Cardiac septum (tissue), 1 donor: ENCODE measurements at regions of chr5 and their contacts with region 1.

Region 1: DNA sequence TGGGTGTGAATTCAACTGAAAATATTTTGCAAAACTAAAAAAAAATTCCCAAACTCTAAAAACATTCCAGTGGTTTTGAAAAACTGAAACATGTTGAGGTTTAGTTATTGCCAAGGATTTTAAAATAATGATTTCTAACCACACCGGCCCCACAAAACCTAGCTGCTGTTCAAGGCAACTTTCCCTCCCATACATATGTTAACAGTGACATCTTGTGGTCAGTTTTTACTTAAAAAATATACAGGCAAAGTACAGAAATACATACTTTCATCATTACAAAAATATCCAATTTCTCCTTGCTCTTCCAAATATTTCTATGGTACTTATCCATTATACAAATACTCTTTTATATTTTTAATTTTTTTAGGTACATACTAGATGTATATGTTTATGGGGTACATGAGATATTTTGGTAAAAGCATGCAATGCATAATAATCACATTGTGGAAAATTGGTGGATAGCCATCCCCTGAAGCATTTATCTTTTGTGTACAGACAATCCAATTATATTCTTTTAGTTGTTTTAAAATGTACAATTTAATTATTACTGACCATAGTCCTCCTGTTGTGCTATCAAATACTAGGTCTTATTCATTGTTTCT is 34.4 kb upstream of the MRPS30 start:
- DNase-seq: no peak

Region 2: GRCh38 chr5:43729846-43730478 is 1044.4 kb before region 1 on chr5:
- intact Hi-C with region 1: loop called (anchors 5 kb)
- DNase-seq: no peak

Region 3: DNA sequence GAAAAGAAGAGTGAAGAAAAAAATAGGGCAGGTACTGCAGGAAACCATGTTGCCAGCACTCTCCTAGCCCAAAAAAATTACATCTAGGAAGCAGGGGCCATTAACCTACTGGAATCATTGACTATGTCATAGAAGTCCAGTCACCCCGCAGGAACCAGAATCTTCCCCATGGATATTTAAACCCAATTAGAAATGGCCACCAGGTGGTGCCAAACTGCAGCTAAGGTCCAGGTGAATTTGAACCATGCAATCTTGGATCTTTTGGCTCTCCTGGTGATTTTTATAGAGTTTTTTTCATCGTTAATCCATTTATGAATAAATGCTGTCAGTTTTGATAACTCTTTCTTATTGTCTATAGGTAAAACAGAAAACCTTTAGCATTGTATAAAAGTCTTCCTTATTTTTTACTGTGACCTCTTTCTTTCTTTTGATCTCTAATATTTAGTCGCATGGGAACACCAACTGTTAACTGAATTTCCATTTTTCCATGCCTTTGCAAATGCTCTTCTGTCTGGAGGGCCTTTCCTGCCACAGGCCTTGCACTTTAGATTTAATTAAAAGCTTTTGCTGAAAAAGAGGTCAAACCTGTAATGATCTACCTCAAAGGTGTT is 237.6 kb before region 1 on chr5:
- intact Hi-C with region 1: loop called (anchors 2 kb)
- DNase-seq: no peak

Region 4: DNA sequence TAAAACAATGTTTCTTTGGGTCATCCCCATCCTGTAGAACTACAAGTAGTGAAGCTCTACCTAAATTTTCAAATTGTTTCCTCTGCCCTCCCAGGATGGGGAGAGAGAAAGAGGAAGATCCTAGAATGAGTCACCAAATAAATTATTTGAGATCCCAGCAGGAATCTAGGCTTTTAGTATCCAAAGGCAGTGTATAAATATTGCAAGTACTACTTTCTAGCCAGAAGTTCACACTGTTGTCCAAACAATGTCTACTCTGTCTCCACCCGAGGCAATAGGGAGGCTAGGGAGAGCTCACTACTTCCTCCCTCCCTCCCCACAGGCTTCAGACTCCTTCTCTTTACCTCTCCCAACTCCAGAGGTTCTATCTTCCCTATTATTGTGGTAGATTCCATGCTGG is 397.2 kb after region 1 on chr5:
- intact Hi-C with region 1: no loop called
- DNase-seq: no peak